Panc1 (cell line): ENCODE measurements at regions of chr15 and their contacts with region 1.

Region 1: GRCh38 chr15:74322181-74323076 is 45.0 kb downstream of the CYP11A1 start:
- DNase-seq: peak; percentile 50
- ATAC-seq: peak; percentile 92
- H3K4me3 ChIP-seq: no peak overlapping the region
- H3K27ac ChIP-seq: no peak overlapping the region
- H3K4me1 ChIP-seq: no peaks in the 10 kb centered on the region; the same call in 1 of the 2 replicates
- H3K27me3 ChIP-seq: no peaks in the 10 kb centered on the region
- CTCF ChIP-seq: peak; percentile 95

Region 2: DNA sequence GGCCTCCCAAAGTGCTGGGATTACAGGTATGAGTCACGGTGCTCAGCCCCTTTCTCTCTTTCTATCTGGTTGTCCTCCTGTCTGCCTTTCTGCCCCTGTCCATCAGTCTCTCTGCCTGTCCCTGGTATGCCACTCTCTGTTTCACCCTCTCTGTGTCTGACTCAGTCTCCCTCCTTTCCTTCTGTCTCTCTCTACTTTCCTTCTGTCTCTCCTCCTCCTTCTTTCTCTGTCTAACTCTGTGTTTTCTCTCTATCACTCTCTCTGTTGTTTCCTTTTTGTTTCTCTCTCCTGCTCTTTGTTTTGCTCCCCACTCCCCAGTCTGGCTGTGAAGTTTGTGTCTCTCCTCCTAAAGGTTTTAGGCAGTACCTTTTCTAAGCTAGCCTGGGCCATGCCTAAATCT is 110.8 kb before region 1 on chr15:
- CTCF ChIA-PET with region 1: interaction called, 10 read pairs
- POLR2A ChIA-PET with region 1: no interaction called
- in situ Hi-C with region 1: no loop called
- intact Hi-C with region 1: no loop called
- DNase-seq: no peak
- ATAC-seq: no peak
- H3K4me3 ChIP-seq: no peak overlapping the region
- H3K27ac ChIP-seq: no peak overlapping the region
- H3K4me1 ChIP-seq: peaks cover 4% of the 10 kb centered on the region; the same call in 1 of the 2 replicates
- H3K27me3 ChIP-seq: no peaks in the 10 kb centered on the region
- CTCF ChIP-seq: no peak

Region 3: DNA sequence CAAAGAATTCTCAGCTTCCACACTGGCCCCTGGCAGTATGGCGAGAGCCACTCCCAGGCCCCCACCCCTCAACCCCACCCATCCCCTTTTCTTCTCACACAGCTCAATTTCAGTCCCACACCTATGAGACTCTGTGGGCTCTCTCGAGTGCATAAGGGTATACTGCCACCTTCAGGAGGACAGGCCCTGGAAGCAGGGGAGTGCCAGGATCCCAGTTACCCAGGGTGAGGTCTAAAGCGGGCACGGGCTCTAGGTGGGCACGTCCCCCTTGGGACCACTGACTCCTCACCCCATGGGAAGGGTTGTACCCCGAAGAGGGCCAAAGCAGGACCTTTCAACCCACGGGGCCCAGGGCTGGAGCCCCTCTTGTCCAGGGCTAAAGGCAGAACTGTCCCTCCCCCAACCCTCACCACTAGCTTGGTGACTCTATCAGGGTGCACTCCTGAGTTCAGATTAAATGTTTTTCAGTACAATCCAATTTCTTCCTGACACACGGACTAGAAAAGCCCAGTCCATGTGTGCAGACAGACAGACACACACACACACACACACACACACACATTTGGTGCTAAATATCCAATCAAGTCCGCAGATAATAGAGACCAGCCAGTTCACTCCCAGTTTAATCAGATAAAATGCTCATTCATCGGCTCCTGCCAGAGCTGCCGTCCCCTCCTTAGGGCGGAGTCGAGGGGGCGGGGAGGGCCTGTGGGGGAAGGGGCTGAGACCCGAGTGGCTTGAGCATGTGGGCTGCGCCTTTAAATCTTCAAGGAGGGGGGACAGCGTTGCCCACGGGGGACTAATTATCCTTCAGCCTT is 14.4 kb before region 1 on chr15:
- CTCF ChIA-PET with region 1: interaction called, 22 read pairs
- POLR2A ChIA-PET with region 1: interaction called, 10 read pairs
- in situ Hi-C with region 1: no loop called
- intact Hi-C with region 1: no loop called
- DNase-seq: no peak
- ATAC-seq: peak; percentile 88
- H3K4me3 ChIP-seq: no peak overlapping the region
- H3K27ac ChIP-seq: no peak overlapping the region
- H3K4me1 ChIP-seq: no peaks in the 10 kb centered on the region; the same call in 1 of the 2 replicates
- H3K27me3 ChIP-seq: no peaks in the 10 kb centered on the region
- CTCF ChIP-seq: peak; percentile 90

Region 4: GRCh38 chr15:74382004-74382816 is 59.8 kb after region 1 on chr15:
- CTCF ChIA-PET with region 1: no interaction called
- POLR2A ChIA-PET with region 1: no interaction called
- in situ Hi-C with region 1: no loop called
- intact Hi-C with region 1: no loop called
- DNase-seq: no peak
- ATAC-seq: peak; percentile 95
- H3K4me3 ChIP-seq: no peak overlapping the region
- H3K27ac ChIP-seq: peak overlapping the region; percentile 12; the same call in 1 of the 2 replicates
- H3K4me1 ChIP-seq: peaks cover 32% of the 10 kb centered on the region
- H3K27me3 ChIP-seq: no peaks in the 10 kb centered on the region
- CTCF ChIP-seq: peak; percentile 95